Heart right ventricle (tissue), 16 donors: ENCODE measurements at regions of chr15 and their contacts with region 1.

Region 1: DNA sequence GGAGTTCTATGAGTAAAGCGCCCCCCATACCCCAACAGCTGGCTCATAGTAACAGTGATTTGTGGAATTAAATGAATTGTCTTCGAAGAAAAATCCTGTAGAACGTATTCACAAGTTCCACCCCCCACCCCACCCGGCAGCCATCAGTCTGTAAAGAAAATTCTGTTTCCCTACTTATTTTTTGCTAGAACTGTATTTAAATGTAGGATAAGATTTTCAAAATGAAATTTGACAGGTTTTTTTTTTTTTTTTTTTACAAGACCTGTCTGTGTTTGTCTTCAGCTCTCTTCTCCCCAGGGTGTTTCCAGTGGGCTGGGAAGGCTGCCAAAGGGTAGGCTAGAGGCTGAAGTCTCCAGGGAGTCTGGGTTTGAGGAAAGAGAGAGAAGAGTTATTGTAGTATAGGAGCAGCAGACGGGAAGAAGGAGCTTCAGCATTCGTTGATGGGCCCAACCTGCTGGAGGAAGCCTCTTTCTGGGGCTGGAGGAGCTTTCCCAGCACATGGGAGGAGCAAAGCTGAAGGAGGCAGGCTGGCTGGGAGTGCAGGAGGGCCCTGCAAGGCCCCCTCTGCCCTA is 130.6 kb upstream of the SEMA6D start:
- DNase-seq: peak; percentile 59 to 78
- ATAC-seq: peak; percentile 27 to 70 (median 49)
- H3K4me3 ChIP-seq: no peak overlapping the region
- H3K27ac ChIP-seq: peak overlapping the region in 3 of 10 donors; percentile 12 to 63 (median 41)
- H3K4me1 ChIP-seq: peaks cover 0 to 32% (median 4%) of the 10 kb centered on the region in 9 donors
- H3K27me3 ChIP-seq: peaks cover 0 to 5% (median 0%) of the 10 kb centered on the region in 7 donors
- CTCF ChIP-seq: no peak

Region 2: DNA sequence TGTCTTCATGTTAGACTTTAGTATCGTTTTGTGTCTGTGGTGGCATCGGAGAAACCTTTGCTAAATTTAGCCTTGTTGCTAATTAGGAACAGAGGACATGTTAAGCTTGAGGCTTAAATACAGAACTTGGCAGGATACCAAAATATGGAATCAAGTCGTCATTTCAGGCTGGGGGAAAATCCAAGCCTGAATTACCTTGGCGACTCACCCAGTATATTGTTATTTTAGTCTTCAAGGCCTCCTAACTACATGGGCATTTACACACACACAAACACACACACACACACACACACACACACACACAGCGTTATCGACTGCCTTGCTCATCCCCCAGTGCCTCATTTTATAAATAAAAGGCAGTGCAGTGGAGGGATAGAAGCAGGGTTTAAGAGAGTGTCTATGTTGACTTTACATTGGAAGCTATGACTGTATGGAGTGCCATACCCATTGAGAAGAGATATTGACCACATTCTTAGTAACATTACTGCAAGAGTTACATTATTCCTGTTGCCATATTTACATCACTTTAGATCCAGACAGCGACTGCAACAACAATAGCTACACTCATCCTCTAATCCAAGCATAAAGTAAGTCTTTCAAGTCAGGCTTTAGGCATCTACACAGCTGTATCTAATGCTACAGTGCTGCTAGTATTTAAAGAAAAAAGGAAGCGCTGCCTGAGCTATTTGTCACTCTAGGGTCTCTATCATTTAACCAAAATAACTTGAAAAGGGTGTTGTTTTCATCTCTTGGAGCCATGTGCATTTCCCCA is 80.2 kb before region 1 on chr15:
- intact Hi-C with region 1: loop called in 1 of 10 experiments (anchors 10 kb)
- DNase-seq: peak in 1 of 2 donors; percentile 27
- ATAC-seq: peak; percentile 36 to 92 (median 86)
- H3K4me3 ChIP-seq: no peak overlapping the region
- H3K27ac ChIP-seq: peak overlapping the region in 8 of 10 donors; percentile 26 to 72 (median 57)
- H3K4me1 ChIP-seq: peaks cover 6 to 48% (median 24%) of the 10 kb centered on the region in 9 donors
- H3K27me3 ChIP-seq: peaks cover 0 to 10% (median 0%) of the 10 kb centered on the region in 7 donors
- CTCF ChIP-seq: no peak

Region 3: DNA sequence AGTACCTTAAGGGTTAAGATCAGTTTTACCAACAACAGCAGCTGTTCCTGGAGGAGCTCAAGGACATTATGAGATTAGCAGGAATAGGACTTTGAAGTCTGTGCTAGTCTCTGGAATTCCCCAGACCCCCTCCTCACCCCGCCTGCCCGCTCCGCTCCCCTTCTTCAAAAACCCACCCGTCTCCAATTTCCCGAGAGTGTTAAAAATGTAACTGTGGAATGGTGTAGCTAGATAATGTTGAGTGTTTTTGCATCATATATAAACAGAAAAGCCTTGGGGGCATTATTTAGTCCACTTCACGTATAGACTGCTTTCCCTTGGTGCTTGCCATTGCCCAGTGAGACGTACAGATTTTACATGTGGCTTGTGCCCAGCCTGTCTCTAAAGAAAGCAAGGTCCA is 65.6 kb after region 1 on chr15:
- intact Hi-C with region 1: loop called in 1 of 10 experiments (anchors 10 kb)
- DNase-seq: no peak
- ATAC-seq: no peak
- H3K4me3 ChIP-seq: no peak overlapping the region
- H3K27ac ChIP-seq: no peak overlapping the region
- H3K4me1 ChIP-seq: no peaks in the 10 kb centered on the region
- H3K27me3 ChIP-seq: peaks cover 0 to 12% (median 0%) of the 10 kb centered on the region in 7 donors
- CTCF ChIP-seq: no peak